H1 (cell line): ENCODE measurements at regions of chr13 and their contacts with region 1.

Region 1: GRCh38 chr13:96053011-96053703 is at the start of gene UGGT2:
- DNase-seq: peak; percentile 59 to 88
- H3K4me3 ChIP-seq: peak within 1 kb of the TSS; percentile 73 to 97 (median 84)
- H3K27ac ChIP-seq: peak within 1 kb of the TSS; percentile 48; the same call in 1 of the 2 replicates
- H3K4me1 ChIP-seq: no peaks in the 10 kb centered on the region
- H3K27me3 ChIP-seq: no peaks in the 10 kb centered on the region
- CTCF ChIP-seq: no peak
- EP300 ChIP-seq: 0 out of 3 replicates have a peak, but pooled peaks of 1 of the 2 experiments have one; percentile 3
- POLR2A ChIP-seq: peak; percentile 50 to 90
- RAD21 ChIP-seq: 0 out of 4 replicates have a peak, but pooled peaks of 1 of the 2 experiments have one; percentile 6
- total RNA-seq, gene UGGT2: 21.9 and 25.1 TPM in 2 replicates

Region 2: GRCh38 chr13:96034662-96035061 is 18.5 kb before region 1 on chr13:
- CTCF ChIA-PET with region 1: interaction called, 8 read pairs
- POLR2A ChIA-PET with region 1: interaction called, 13 read pairs
- DNase-seq: no peak
- H3K4me3 ChIP-seq: no peak overlapping the region
- H3K27ac ChIP-seq: no peak overlapping the region
- H3K4me1 ChIP-seq: peaks cover 0 to 14% (median 2%) of the 10 kb centered on the region in 4 experiments; a peak in 1 of 7 replicates
- H3K27me3 ChIP-seq: no peaks in the 10 kb centered on the region
- CTCF ChIP-seq: no peak
- EP300 ChIP-seq: no peak
- POLR2A ChIP-seq: no peak
- RAD21 ChIP-seq: no peak

Region 3: GRCh38 chr13:96041326-96042110 is 11.6 kb before region 1 on chr13:
- CTCF ChIA-PET with region 1: interaction called, 9 read pairs
- POLR2A ChIA-PET with region 1: interaction called, 21 read pairs
- DNase-seq: no peak
- H3K4me3 ChIP-seq: peak overlapping the region in 2 of 4 experiments; percentile 12 to 15; a peak in 1 of 8 replicates
- H3K27ac ChIP-seq: no peak overlapping the region; the same call in 1 of the 2 replicates
- H3K4me1 ChIP-seq: peaks cover 0 to 8% (median 0%) of the 10 kb centered on the region in 4 experiments; a peak in 3 of 7 replicates
- H3K27me3 ChIP-seq: no peaks in the 10 kb centered on the region
- CTCF ChIP-seq: no peak
- EP300 ChIP-seq: no peak
- POLR2A ChIP-seq: no peak
- RAD21 ChIP-seq: no peak

Region 4: DNA sequence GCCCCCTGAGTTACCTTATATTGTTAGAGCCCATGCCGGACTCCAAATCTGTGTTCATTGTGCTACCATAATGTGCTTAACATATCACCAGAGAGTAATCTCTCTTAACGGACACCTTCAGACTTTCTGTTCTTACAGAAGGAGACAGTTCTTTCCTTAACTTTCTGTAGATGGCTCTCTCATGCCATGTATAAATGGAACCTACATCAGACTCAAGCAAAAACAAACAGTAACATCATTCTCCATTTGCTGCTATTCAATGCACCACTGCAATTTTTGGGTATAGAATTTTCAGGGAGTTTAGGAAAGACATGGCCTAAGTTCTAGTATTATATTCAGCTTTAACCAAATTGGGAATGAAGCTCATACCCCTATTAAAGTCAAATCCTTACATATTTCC is 12.7 kb after region 1 on chr13:
- CTCF ChIA-PET with region 1: interaction called, 31 read pairs
- POLR2A ChIA-PET with region 1: interaction called, 6 read pairs
- DNase-seq: no peak
- H3K4me3 ChIP-seq: no peak overlapping the region
- H3K27ac ChIP-seq: no peak overlapping the region
- H3K4me1 ChIP-seq: peaks cover 0 to 4% (median 0%) of the 10 kb centered on the region in 4 experiments; a peak in 2 of 7 replicates
- H3K27me3 ChIP-seq: no peaks in the 10 kb centered on the region
- CTCF ChIP-seq: no peak
- EP300 ChIP-seq: no peak
- POLR2A ChIP-seq: no peak
- RAD21 ChIP-seq: no peak

Region 5: GRCh38 chr13:96075953-96076543 is 22.9 kb after region 1 on chr13:
- CTCF ChIA-PET with region 1: interaction called, 37 read pairs
- POLR2A ChIA-PET with region 1: interaction called, 6 read pairs
- DNase-seq: no peak
- H3K4me3 ChIP-seq: no peak overlapping the region
- H3K27ac ChIP-seq: no peak overlapping the region
- H3K4me1 ChIP-seq: no peaks in the 10 kb centered on the region
- H3K27me3 ChIP-seq: no peaks in the 10 kb centered on the region
- CTCF ChIP-seq: peak in 1 of 3 experiments; percentile 53; a peak in 2 of 4 replicates
- EP300 ChIP-seq: no peak
- POLR2A ChIP-seq: no peak
- RAD21 ChIP-seq: peak in 1 of 2 experiments; percentile 14; a peak in 1 of 4 replicates